ENCODE measurements at regions of chr10 and their contacts with region 1.

Region 1: GRCh38 chr10:15370856-15371701 is at the start of gene FAM171A1:
- DNase-seq: no peak
- H3K4me3 ChIP-seq: peak within 1 kb of the TSS; percentile 75 to 93 (median 77)
- H3K27ac ChIP-seq: peak within 1 kb of the TSS; percentile 81
- H3K4me1 ChIP-seq: peaks cover 39% of the 10 kb centered on the region
- H3K27me3 ChIP-seq: no peaks in the 10 kb centered on the region
- CTCF ChIP-seq: peak in 1 of 2 donors; percentile 12
- POLR2A ChIP-seq: no peak
- total RNA-seq, gene FAM171A1: 75.8 and 81.8 TPM in 2 replicates

Region 2: GRCh38 chr10:14397066-14397465 is 974.0 kb before region 1 on chr10:
- CTCF ChIA-PET with region 1: no interaction called
- POLR2A ChIA-PET with region 1: no interaction called
- dilution Hi-C with region 1: no loop called
- intact Hi-C with region 1: no loop called
- DNase-seq: no peak
- H3K4me3 ChIP-seq: no peak overlapping the region
- H3K27ac ChIP-seq: no peak overlapping the region
- H3K4me1 ChIP-seq: no peaks in the 10 kb centered on the region
- H3K27me3 ChIP-seq: peaks cover 3 to 8% of the 10 kb centered on the region in 2 experiments
- CTCF ChIP-seq: no peak
- POLR2A ChIP-seq: no peak

Region 3: GRCh38 chr10:14500172-14500765 is 870.8 kb before region 1 on chr10:
- CTCF ChIA-PET with region 1: no interaction called
- POLR2A ChIA-PET with region 1: no interaction called
- dilution Hi-C with region 1: no loop called
- intact Hi-C with region 1: no loop called
- DNase-seq: no peak
- H3K4me3 ChIP-seq: no peak overlapping the region
- H3K27ac ChIP-seq: no peak overlapping the region
- H3K4me1 ChIP-seq: no peaks in the 10 kb centered on the region
- H3K27me3 ChIP-seq: no peaks in the 10 kb centered on the region
- CTCF ChIP-seq: no peak
- POLR2A ChIP-seq: no peak

Region 4: DNA sequence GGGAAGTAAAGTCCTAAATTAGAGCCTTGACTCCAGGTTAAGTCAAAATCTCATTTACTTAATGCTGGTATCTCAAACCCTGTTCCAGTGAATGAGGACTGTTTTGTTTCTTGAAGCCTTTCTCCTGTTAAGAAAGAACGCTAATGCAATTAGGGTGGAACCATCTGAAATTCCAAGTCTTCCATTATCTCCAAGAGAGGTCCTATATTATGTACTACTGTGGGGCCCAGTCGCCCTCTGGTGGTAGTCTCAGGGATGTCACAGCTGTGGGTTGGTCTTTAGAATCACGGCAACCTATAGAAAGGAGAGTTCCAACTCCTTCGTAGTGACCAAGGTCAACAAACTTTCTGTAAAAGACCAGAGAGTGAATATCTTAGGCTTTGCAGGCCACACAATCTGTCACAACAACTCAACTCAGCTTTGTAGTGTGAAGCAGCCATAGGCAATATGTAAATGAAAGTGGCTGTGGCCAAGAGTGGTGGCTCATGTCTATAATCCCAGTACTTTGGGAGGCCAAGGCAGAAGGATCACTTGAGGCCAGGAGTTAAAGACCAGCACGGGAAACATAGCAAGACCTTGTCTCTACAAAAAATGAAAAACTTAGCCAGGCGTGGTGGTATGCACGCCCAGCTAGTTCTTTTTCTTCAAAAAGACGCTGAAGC is 264.6 kb before region 1 on chr10:
- CTCF ChIA-PET with region 1: interaction called, 5 read pairs
- POLR2A ChIA-PET with region 1: no interaction called
- dilution Hi-C with region 1: no loop called
- intact Hi-C with region 1: loop called (anchors 10 kb)
- DNase-seq: peak; percentile 81
- H3K4me3 ChIP-seq: no peak overlapping the region
- H3K27ac ChIP-seq: peak overlapping the region; percentile 19
- H3K4me1 ChIP-seq: peaks cover 13% of the 10 kb centered on the region
- H3K27me3 ChIP-seq: no peaks in the 10 kb centered on the region
- CTCF ChIP-seq: peak; percentile 81 to 83
- POLR2A ChIP-seq: no peak

Region 5: DNA sequence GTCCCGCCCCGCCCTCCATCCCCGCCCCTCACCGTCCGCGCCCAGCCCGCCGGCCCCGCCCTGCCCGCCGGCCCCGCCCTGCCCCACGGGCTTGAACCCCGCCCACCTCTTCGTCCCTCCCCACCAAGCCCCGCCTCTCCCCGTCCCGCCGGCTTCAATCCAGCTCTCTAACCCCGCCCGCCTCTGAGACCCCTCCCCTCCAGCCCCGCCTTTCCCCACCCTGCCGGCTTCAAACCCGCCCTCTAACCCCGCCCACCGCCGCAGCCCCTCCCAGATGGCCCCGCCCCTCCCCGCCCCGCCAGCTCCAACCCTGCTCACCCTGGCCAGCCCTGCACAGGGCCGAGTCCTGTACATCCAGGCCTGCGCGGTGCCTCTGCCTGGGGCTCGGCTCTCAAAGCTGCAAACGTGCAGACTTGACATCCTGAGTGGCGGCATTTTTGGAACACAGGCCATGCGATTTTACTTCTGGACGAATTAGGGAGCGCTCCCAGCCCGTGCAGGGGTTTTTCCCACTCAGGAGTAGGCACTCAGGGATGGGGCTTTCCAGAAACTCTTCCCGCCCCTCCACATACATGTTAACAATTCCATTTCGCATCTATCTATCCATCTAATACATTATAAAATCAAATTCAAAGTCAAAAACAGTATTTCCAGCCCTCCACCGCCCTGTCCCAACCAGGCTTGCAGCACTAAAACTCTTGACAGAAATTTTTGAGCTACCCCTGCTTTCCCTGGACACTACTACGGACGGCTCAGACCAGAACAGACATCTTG is 202.1 kb before region 1 on chr10:
- CTCF ChIA-PET with region 1: interaction called, 22 read pairs
- POLR2A ChIA-PET with region 1: interaction called, 3 read pairs
- dilution Hi-C with region 1: no loop called
- intact Hi-C with region 1: loop called (anchors 1 kb)
- DNase-seq: peak; percentile 87
- H3K4me3 ChIP-seq: no peak overlapping the region
- H3K27ac ChIP-seq: no peak overlapping the region
- H3K4me1 ChIP-seq: peaks cover 35% of the 10 kb centered on the region
- H3K27me3 ChIP-seq: no peaks in the 10 kb centered on the region
- CTCF ChIP-seq: no peak
- POLR2A ChIP-seq: no peak

Region 6: DNA sequence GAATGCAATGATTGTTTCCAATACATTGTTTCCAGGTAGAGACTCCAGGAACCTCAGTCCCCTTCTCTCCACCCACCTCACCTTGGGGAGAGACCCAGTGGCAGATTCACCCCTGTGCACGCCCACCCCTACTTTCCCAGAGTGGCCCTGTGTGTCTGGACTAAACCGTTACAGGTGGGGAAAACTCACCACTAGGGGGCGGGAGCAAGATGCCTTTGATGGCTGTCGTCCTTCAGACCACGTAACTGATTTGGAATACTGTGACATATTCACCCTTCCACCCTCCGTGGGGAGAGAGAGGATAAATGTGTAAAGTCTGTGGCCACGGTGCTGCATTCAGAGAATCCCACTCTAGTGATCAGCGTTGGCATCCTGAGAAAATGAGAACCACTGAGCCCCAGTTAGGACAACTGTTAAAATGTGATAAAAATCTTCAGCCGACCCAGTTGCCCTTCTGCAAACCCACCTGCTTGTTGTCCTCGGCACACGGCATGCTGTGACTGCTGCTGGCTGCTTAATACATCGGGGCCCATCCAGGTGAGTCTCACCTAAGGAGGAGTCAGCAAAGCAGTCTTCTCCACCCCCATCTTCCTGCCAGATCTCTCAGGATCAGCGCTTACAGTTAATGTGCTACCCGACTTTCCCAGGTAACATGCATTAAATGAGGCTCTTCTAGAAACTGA is 161.1 kb before region 1 on chr10:
- CTCF ChIA-PET with region 1: interaction called, 24 read pairs
- POLR2A ChIA-PET with region 1: no interaction called
- dilution Hi-C with region 1: no loop called
- intact Hi-C with region 1: loop called (anchors 1 kb)
- DNase-seq: peak; percentile 72
- H3K4me3 ChIP-seq: no peak overlapping the region
- H3K27ac ChIP-seq: no peak overlapping the region
- H3K4me1 ChIP-seq: peaks cover 11% of the 10 kb centered on the region
- H3K27me3 ChIP-seq: no peaks in the 10 kb centered on the region
- CTCF ChIP-seq: peak; percentile 85 to 86
- POLR2A ChIP-seq: no peak

Region 7: DNA sequence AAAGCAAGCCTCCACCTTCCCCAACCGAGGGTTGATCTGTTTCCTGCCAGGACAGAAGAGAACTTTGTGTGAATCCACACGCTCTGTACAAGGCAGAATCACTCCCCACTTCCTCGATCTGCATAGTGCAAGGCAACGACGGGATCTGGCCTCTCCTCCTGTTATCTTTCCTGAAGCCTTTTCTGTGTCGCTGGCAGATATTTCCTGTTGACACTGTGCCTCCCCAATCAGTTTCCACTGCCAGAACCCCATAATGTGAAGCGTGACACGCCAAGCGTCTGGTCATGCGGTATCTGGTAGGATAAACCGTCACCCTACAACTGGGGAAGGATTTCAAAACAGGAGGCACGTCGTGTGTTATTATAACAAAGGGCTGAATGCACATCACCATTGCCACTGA is 57.2 kb before region 1 on chr10:
- CTCF ChIA-PET with region 1: interaction called, 5 read pairs
- POLR2A ChIA-PET with region 1: no interaction called
- dilution Hi-C with region 1: no loop called
- intact Hi-C with region 1: loop called (anchors 5 kb)
- DNase-seq: peak; percentile 84
- H3K4me3 ChIP-seq: peak overlapping the region in 1 of 3 experiments; percentile 32
- H3K27ac ChIP-seq: peak overlapping the region; percentile 42
- H3K4me1 ChIP-seq: peaks cover 34% of the 10 kb centered on the region
- H3K27me3 ChIP-seq: no peaks in the 10 kb centered on the region
- CTCF ChIP-seq: no peak
- POLR2A ChIP-seq: peak; percentile 37

Region 8: DNA sequence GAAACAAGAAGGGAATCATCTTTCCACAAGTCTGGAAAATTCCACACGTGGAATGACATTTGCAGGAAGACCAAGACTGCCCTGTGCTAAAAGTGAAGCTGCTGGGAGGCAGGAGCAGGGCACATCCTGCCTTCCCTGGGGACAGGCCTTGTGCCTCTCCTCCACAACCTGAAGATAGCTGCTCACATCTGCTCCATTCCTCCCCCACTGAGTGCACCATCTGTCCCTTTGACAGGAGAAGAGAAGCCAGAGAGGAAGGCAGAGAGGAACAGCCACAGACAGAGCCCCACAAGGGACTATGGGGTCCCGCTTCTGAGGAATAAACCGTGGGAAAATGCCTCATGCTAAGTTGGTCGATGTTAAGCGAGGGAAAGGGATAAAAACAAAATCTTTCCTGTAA is 15.9 kb after region 1 on chr10:
- CTCF ChIA-PET with region 1: interaction called, 25 read pairs
- POLR2A ChIA-PET with region 1: no interaction called
- dilution Hi-C with region 1: no loop called
- intact Hi-C with region 1: loop called (anchors 1 kb)
- DNase-seq: no peak
- H3K4me3 ChIP-seq: no peak overlapping the region
- H3K27ac ChIP-seq: no peak overlapping the region
- H3K4me1 ChIP-seq: peaks cover 20% of the 10 kb centered on the region
- H3K27me3 ChIP-seq: no peaks in the 10 kb centered on the region
- CTCF ChIP-seq: no peak
- POLR2A ChIP-seq: no peak

Region 9: DNA sequence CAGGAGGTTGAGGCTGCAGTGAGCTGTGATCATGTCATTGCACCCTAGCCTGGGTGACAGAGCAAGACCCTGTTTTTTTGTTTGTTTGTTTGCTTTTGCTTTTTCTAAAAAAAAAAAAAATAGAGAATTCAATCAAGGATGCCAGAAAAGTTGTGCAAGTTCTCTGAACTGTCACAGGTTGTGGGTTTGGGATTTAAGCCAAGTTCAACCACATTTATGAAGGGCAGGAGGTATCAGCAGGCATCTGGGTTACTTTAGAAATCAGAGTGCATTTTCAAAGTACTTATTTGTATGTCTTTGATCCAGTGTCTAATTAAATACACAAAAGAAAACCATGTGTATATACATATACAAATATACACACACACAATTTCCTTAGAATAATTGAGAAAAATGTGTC is 640.5 kb after region 1 on chr10:
- CTCF ChIA-PET with region 1: no interaction called
- POLR2A ChIA-PET with region 1: no interaction called
- dilution Hi-C with region 1: no loop called
- intact Hi-C with region 1: no loop called
- DNase-seq: no peak
- H3K4me3 ChIP-seq: no peak overlapping the region
- H3K27ac ChIP-seq: no peak overlapping the region
- H3K4me1 ChIP-seq: peaks cover 2% of the 10 kb centered on the region
- H3K27me3 ChIP-seq: no peaks in the 10 kb centered on the region
- CTCF ChIP-seq: no peak
- POLR2A ChIP-seq: no peak

Measured in endothelial cell of umbilical vein (primary cell).